Psoas muscle (tissue), 8 donors: ENCODE measurements at regions of chr1 and their contacts with region 1.

Region 1: DNA sequence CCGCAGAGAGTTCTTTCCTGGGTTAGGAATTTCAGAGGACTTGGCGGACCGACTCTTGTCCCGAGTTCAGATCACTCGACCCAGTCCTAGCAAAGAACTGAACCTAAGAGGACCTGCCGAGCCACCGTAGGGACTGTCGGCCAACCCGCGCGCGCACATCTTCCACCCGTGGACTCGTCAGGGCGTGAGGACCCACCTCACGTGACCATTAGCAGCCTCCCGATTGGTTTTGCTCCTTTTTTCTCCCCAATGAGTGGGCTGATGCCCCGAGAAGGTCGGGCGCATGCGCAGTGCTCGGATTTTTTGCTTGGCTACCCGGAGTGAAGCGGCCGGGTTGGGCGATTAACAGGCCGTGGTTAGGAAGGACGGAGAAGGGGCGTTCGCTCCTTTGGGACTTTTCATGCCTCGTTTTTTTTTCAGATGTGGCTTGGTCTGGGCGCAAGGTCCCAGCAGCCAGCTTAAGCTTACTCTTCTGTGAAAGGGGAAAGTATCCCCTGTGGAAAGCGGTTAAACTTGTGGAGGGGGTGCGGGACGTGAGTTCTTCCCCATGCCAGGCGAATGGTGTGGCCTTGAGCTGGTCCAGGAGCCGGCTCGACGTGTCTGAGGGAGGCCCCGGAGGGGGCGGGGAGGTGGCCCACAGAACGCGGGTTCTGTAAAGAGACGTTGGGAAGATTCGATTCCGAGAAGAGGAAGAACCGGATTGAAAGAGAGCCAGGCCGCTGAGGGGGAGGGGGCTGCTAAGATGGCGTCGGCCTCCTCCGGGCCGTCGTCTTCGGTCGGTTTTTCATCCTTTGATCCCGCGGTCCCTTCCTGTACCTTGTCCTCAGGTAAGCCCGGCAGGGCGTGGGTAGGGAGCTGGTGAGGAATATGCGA is at the start of gene PIP5K1A:
- DNase-seq: peak; percentile 99 to 100
- ATAC-seq: peak; percentile 93 to 97 (median 95)
- H3K4me3 ChIP-seq: peak within 1 kb of the TSS; percentile 95
- H3K27ac ChIP-seq: peak within 1 kb of the TSS; percentile 92
- H3K4me1 ChIP-seq: peaks cover 43% of the 10 kb centered on the region
- H3K27me3 ChIP-seq: no peaks in the 10 kb centered on the region
- CTCF ChIP-seq: no peak
- total RNA-seq, gene PIP5K1A: 29.5 to 46.8 (median 38.6) TPM

Region 2: DNA sequence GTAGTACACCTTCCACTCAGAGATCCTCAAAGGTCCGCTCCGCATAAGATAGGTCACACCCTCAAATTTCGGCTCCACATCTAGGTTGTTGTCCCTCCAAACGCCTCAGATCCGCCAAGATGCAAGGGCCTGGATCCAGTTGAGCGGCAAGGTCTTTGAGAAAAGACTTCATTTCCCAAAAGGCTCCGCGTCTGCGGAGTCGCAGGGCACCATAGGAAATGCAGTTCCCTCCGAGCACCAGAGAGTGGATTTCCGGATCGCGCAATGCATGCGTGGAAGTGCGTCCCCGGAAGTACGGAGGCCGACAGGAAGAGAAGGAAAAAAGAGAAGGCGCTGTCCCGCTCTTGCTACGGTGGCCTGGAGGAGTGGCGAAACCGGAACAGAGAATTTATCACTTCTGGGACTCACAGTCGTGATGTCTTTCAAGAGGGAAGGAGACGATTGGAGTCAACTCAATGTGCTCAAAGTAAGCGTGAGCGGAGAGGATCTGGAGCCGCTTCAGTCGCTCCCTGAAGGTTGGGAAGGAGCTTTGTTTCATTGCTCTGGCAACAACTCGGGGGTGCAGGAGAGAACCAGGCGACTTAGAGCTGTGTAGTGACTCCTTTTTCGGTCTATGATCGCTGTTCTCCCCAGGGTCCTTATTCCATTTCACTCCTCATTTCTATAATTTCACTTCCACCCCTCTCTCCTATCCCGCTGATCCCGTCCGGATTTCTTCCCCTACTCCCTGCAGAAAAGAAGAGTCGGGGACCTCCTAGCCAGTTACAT is 32.6 kb before region 1 on chr1 and contains the starts of genes LYSMD1 and SCNM1:
- intact Hi-C with region 1: no loop called
- DNase-seq: peak; percentile 97 to 98
- ATAC-seq: peak; percentile 84 to 89 (median 85)
- H3K4me3 ChIP-seq: peak within 1 kb of the TSS; percentile 80
- H3K27ac ChIP-seq: peak within 1 kb of the TSS; percentile 92
- H3K4me1 ChIP-seq: peaks cover 48% of the 10 kb centered on the region
- H3K27me3 ChIP-seq: no peaks in the 10 kb centered on the region
- CTCF ChIP-seq: no peak
- total RNA-seq, gene LYSMD1: 6.7 to 17.5 (median 12.3) TPM
- total RNA-seq, gene SCNM1: 23.6 to 47.9 (median 39.5) TPM

Region 3: GRCh38 chr1:151238467-151238739 is 39.9 kb after region 1 on chr1:
- intact Hi-C with region 1: loop called in 1 of 2 experiments (anchors 5 kb)
- DNase-seq: no peak
- ATAC-seq: peak; percentile 92 to 95 (median 94)
- H3K4me3 ChIP-seq: no peak overlapping the region
- H3K27ac ChIP-seq: peak overlapping the region; percentile 71
- H3K4me1 ChIP-seq: peaks cover 18% of the 10 kb centered on the region
- H3K27me3 ChIP-seq: no peaks in the 10 kb centered on the region
- CTCF ChIP-seq: no peak

Region 4: DNA sequence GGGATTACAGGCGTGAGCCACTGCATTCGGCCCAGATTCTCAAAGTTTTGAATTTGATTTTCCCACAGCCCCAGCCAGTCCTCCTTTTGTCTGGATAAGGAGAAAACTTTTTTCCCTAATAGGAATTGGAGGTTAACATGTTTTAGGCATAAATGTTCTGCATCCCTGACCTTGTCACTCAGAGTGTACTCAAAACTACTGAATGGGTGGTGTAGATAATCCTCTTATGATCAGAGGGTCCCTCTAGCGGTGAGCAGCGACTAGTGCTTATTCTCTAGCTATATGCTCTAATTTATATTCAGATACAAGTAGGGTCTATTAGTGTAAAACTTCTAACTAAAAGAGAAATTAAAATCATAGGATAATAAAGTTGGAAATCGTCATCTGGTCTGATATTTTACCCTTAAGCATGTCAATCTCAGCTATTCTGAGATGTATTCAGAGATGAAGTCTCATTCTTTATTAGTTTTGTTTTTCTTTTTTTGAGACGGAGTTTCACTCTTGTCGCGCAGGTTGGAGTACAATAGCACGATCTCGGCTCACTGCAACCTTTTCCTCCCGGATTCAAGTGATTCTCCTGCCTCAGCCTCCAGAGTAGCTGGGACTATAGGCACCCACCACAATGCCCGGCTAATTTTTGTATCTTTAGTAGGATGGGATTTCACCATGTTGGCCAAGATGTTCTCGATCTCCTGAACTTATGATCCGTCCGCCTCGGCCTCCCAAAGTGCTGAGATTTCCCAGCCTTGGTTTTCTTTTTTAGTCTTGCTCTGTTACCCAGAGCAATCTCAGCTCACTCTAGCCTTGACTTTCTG is 53.4 kb after region 1 on chr1:
- intact Hi-C with region 1: loop called (anchors 1 to 2 kb)
- DNase-seq: peak; percentile 29 to 63
- ATAC-seq: peak; percentile 46 to 60 (median 50)
- H3K4me3 ChIP-seq: no peak overlapping the region
- H3K27ac ChIP-seq: peak overlapping the region; percentile 20
- H3K4me1 ChIP-seq: peaks cover 13% of the 10 kb centered on the region
- H3K27me3 ChIP-seq: no peaks in the 10 kb centered on the region
- CTCF ChIP-seq: peak; percentile 81

Region 5: DNA sequence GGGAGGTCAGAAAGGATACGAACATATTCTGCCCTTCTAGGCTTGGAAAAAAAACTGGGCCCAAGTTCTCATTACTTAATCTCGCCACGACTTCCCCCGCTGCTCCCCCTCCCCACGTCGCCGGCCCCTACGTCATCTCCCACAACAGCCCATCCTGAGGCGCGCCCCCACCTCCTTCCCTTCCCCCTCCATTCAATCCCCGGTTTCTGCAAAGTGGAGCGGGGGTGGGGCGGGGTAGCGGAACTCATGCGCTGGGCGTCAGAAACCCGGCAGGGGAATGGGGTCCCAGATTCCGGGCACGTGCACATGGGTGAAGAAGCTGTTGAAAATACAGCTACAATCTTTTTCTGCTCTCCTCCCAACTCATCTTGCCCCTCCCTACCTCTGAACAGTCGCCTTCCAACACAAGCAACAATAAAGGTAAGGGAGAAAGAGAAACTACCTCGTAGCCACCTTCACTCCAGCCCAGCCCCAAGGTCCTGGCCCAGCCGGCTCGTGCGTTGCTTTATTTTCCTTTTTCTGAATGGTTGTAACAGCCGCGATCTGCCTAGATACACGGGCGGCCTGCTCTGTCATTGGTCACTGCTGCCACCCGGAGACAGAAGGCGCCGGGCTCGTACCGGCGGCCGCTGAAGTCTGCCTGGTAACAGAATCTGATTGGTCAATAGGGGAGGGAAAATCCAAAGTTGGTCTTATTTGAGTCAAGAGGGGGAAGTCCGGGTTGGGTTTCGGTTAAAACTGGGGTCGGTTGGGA is 148.5 kb after region 1 on chr1 and contains the start of gene RFX5:
- intact Hi-C with region 1: loop called in 1 of 2 experiments (anchors 5 kb)
- DNase-seq: peak; percentile 92 to 96
- ATAC-seq: peak; percentile 98 to 99 (median 99)
- H3K4me3 ChIP-seq: peak within 1 kb of the TSS; percentile 88
- H3K27ac ChIP-seq: peak within 1 kb of the TSS; percentile 91
- H3K4me1 ChIP-seq: peaks cover 16% of the 10 kb centered on the region
- H3K27me3 ChIP-seq: no peaks in the 10 kb centered on the region
- CTCF ChIP-seq: no peak
- total RNA-seq, gene RFX5: 16.9 to 38.7 (median 21.6) TPM